CD8-positive, alpha-beta T cell (primary cell): ENCODE measurements at regions of chrX and their contacts with region 1.

Region 1: GRCh38 chrX:149286940-149287349 is 218.2 kb downstream of the IDS start:
- DNase-seq: peak in 8 of 9 experiments; percentile 6 to 63 (median 33)
- ATAC-seq: no peak
- H3K4me3 ChIP-seq: no peak overlapping the region
- H3K4me3 Mint-ChIP-seq: no peak overlapping the region
- H3K27ac ChIP-seq: no peak overlapping the region
- H3K27ac Mint-ChIP-seq: no peak overlapping the region
- H3K4me1 ChIP-seq: no peaks in the 10 kb centered on the region
- H3K4me1 Mint-ChIP-seq: no peaks in the 10 kb centered on the region
- H3K27me3 ChIP-seq: no peaks in the 10 kb centered on the region
- H3K27me3 Mint-ChIP-seq: no peaks in the 10 kb centered on the region
- CTCF ChIP-seq: peak; percentile 54

Region 2: DNA sequence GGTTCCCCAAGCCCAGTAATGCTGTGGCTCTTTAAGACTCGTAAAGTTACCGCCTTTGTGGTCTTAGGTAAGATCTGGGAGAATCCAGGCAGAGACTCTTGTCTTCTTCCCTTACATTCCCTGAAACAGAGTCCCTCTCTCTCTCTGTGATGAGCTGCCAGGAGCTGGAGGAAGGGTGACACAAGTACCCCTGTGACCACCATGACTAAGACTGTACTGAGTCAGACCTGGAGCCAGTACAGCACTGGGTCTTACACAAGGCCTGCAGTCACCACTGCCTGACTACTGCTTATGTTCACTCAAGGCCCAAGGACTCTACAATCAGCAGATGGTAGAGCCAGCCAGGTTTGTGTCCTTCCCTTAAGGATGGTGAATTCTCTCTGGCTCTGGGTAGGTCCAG is 1243.5 kb before region 1 on chrX:
- CTCF ChIA-PET with region 1: interaction called, 12 read pairs
- POLR2A ChIA-PET with region 1: no interaction called
- intact Hi-C with region 1: no loop called
- DNase-seq: no peak
- ATAC-seq: no peak
- H3K4me3 ChIP-seq: no peak overlapping the region
- H3K4me3 Mint-ChIP-seq: no peak overlapping the region
- H3K27ac ChIP-seq: no peak overlapping the region
- H3K27ac Mint-ChIP-seq: no peak overlapping the region
- H3K4me1 ChIP-seq: no peaks in the 10 kb centered on the region
- H3K4me1 Mint-ChIP-seq: no peaks in the 10 kb centered on the region
- H3K27me3 ChIP-seq: no peaks in the 10 kb centered on the region
- H3K27me3 Mint-ChIP-seq: no peaks in the 10 kb centered on the region
- CTCF ChIP-seq: no peak

Region 3: DNA sequence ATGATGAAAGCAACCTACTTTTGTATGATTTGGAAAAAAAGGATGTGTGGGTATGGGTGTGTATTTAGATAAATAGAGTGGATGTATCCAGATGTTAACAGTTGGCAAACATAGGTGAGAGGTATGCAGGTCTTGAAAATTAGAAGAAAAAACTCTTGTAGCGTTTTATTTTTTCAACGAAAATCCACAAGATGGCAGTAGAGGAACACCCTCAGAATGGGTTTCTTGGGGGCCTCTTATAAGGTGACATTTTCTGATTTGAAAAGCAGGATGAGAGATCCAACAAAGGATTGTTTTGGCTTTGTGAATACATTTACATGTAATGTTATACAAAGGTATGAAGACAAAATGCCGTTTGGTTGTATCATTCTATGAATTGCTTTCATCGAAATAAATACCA is 1237.5 kb before region 1 on chrX:
- CTCF ChIA-PET with region 1: interaction called, 20 read pairs
- POLR2A ChIA-PET with region 1: no interaction called
- intact Hi-C with region 1: loop called (anchors 1 kb)
- DNase-seq: peak in 2 of 9 experiments; percentile 40 to 54
- ATAC-seq: no peak
- H3K4me3 ChIP-seq: no peak overlapping the region
- H3K4me3 Mint-ChIP-seq: no peak overlapping the region
- H3K27ac ChIP-seq: no peak overlapping the region
- H3K27ac Mint-ChIP-seq: no peak overlapping the region
- H3K4me1 ChIP-seq: no peaks in the 10 kb centered on the region
- H3K4me1 Mint-ChIP-seq: no peaks in the 10 kb centered on the region
- H3K27me3 ChIP-seq: no peaks in the 10 kb centered on the region
- H3K27me3 Mint-ChIP-seq: no peaks in the 10 kb centered on the region
- CTCF ChIP-seq: peak; percentile 41

Region 4: DNA sequence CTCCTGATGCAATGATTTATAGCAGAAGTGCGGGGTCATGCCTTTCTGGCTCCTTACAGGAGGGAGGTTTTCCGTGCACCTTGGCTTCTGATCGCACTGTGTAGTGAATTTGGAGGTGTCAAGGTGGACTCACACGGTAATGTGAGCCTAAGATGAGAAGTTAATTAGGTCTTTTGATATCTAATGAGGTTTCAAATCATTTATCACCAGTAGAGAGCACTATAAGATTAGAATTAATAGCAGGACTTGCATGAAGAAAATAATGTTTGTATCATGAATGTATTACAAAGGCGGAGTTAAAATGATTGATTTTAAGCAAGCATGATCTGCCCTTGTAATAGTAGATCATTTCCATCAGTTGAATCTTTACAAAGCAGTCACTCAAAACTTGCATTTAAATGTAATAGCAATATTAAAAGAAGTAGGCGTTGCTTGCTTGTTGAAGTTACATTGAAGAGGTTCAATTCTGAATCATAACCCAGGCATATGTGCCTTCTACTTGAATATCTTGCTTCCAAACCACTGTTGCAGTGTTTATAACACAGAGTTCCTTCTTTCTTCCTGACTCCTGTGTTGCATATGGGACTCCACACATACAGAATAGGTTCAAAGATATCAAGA is 1153.7 kb before region 1 on chrX:
- CTCF ChIA-PET with region 1: interaction called, 22 read pairs
- POLR2A ChIA-PET with region 1: no interaction called
- intact Hi-C with region 1: loop called (anchors 1 kb)
- DNase-seq: peak in 2 of 9 experiments; percentile 17 to 38
- ATAC-seq: no peak
- H3K4me3 ChIP-seq: no peak overlapping the region
- H3K4me3 Mint-ChIP-seq: no peak overlapping the region
- H3K27ac ChIP-seq: no peak overlapping the region
- H3K27ac Mint-ChIP-seq: no peak overlapping the region
- H3K4me1 ChIP-seq: no peaks in the 10 kb centered on the region
- H3K4me1 Mint-ChIP-seq: no peaks in the 10 kb centered on the region
- H3K27me3 ChIP-seq: no peaks in the 10 kb centered on the region
- H3K27me3 Mint-ChIP-seq: no peaks in the 10 kb centered on the region
- CTCF ChIP-seq: peak; percentile 47

Region 5: DNA sequence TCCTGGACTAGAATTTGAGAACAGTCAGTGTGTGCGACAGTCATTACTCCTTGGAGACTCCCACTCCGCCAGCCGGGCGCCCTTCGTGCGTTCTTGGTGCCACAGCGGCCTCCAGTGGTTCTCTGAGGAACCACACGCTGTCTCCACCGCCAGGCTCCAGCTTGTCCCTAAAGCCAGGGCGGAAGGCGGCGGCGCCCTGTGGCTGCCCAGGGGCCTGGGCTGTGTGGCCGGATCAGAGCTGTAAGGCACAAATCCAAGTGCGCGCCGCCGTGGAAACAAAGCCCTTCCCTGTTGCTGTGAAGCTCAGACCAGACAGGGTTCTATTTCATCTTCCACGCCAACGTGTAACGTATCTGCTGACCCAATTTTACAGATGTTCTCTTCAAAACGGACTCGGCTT is 184.0 kb after region 1 on chrX:
- CTCF ChIA-PET with region 1: interaction called, 6 read pairs
- POLR2A ChIA-PET with region 1: no interaction called
- intact Hi-C with region 1: loop called in 1 of 2 experiments (anchors 5 kb)
- DNase-seq: peak in 8 of 9 experiments; percentile 30 to 71 (median 62)
- ATAC-seq: peak; percentile 80
- H3K4me3 ChIP-seq: no peak overlapping the region
- H3K4me3 Mint-ChIP-seq: no peak overlapping the region
- H3K27ac ChIP-seq: no peak overlapping the region
- H3K27ac Mint-ChIP-seq: no peak overlapping the region
- H3K4me1 ChIP-seq: no peaks in the 10 kb centered on the region
- H3K4me1 Mint-ChIP-seq: peaks cover 3% of the 10 kb centered on the region
- H3K27me3 ChIP-seq: no peaks in the 10 kb centered on the region
- H3K27me3 Mint-ChIP-seq: peaks cover under 1% of the 10 kb centered on the region
- CTCF ChIP-seq: peak; percentile 73